IMR-90 (cell line): ENCODE measurements at regions of chr17 and their contacts with region 1.

Region 1: DNA sequence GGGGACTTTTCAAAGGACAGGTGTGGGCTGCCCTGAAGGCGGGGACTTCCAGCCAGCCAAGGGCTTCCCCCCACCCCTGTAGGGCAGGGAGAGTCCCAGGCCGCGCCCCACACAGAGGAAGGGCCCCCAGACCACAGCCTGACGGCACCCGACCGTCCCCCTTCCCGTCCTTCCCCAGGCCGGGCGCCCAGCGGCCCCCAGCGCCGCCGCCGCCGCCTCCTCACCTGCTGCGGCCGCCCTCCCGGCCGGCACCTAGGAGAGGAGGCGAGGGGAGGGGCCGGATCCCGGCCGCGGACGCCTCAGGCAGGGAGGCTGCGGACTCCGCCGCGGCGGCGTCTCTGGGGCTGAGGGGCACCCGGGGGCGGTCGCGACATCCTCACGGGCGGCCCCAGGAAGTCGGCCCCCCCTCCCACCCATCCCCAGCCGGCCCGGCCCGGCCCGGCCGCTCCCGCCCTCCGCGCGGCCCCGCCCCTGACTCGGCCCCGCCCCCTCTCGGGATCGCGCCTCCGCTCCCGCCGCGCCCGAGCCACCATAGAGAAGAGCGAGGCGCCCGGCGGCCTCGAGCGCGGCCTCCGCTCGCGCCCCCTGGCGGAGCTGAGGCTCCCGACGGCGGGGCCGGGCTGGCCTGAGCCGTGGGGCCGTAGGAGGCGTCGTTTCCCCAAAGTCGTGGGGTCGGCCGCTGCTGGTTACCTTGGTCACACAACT is 25.5 kb upstream of the RFFL start:
- DNase-seq: peak; percentile 69
- ATAC-seq: peak; percentile 89
- H3K4me3 ChIP-seq: peak overlapping the region; percentile 87
- H3K27ac ChIP-seq: peak overlapping the region; percentile 73
- H3K4me1 ChIP-seq: peaks cover 11% of the 10 kb centered on the region
- H3K27me3 ChIP-seq: no peaks in the 10 kb centered on the region
- CTCF ChIP-seq: peak; percentile 87
- POLR2A ChIP-seq: no peak; the same call in 1 of the 2 replicates
- RAD21 ChIP-seq: peak; percentile 79

Region 2: DNA sequence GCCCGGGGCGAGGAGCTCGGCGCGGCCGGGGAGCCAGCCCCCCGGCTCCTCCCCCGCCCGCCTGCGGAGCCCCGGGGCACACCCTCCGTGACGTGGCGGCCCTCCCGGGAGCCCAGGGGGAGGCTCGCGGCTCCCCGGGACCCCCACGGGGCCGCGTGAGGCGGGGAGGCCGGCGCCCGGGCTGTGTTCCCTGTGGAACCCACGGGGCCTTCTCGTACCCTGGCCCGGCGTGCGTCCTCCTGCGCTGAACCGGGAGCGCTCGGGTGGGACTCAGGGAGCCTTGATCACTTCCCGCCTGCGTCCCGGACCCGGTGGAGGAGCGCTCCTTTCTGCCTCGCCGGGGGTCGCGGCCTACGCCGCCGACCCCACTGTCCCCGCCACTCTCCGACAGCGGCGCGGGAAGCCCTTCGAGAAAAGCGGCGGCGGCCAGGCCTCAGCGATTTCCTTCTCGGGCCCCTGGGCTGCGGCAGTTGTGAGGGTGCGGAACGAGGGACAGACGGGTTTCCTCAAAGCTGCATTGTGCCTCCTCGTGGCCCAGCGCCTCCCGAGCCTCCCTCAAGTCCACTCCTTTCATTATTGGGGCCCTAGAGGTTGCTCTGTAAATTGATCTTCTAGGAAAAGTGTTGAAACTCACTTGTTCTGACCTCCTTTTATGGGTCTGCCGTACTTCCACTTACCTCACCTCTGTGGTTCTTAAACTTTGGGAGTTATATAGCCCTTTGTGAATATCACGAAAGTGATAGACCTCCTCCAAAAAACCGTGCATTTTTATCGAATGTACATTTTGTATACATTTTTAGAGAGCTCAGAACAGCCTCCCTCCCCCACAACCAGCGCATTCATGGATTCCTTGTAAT is 108.1 kb before region 1 on chr17:
- CTCF ChIA-PET with region 1: no interaction called
- POLR2A ChIA-PET with region 1: no interaction called
- dilution Hi-C with region 1: no loop called
- in situ Hi-C with region 1: no loop called
- intact Hi-C with region 1: loop called (anchors 1 kb)
- DNase-seq: peak; percentile 80
- ATAC-seq: peak; percentile 94
- H3K4me3 ChIP-seq: peak overlapping the region; percentile 91
- H3K27ac ChIP-seq: peak overlapping the region; percentile 96
- H3K4me1 ChIP-seq: peaks cover 7% of the 10 kb centered on the region
- H3K27me3 ChIP-seq: no peaks in the 10 kb centered on the region
- CTCF ChIP-seq: peak; percentile 50
- POLR2A ChIP-seq: peak; percentile 77
- RAD21 ChIP-seq: peak; percentile 36

Region 3: DNA sequence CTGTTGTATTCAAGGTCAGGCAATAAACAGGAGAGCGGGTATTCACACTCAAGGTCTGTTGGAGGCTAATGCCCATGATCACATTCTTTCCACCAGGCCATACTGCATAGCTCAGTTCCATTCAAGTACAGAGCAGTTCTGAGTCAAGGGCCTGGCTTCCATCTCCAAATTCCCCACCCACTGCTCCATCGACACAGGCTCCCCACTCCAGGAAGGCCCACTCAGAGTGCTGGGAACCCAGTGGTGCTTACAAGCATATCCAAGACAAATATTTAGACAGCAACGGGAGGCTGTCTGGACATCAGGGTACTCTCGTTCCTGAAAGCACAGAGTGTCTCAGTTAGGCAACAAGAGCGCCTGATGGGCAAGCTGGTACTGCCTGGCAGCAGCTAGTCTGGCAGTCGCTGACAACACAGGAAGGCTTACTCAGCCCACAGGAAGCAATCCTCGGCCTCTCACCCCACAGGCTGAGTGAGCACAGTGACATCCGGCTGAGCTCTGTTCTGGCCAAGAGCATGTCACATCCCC is 66.4 kb before region 1 on chr17:
- CTCF ChIA-PET with region 1: interaction called, 4 read pairs
- POLR2A ChIA-PET with region 1: interaction called, 3 read pairs
- dilution Hi-C with region 1: no loop called
- in situ Hi-C with region 1: no loop called
- intact Hi-C with region 1: loop called (anchors 1 kb)
- DNase-seq: peak; percentile 87
- ATAC-seq: peak; percentile 97
- H3K4me3 ChIP-seq: no peak overlapping the region
- H3K27ac ChIP-seq: peak overlapping the region; percentile 34
- H3K4me1 ChIP-seq: 0 out of 2 replicates have a peak, but pooled peaks cover 2% of the 10 kb centered on the region
- H3K27me3 ChIP-seq: no peaks in the 10 kb centered on the region
- CTCF ChIP-seq: peak; percentile 50
- POLR2A ChIP-seq: peak; percentile 68; the same call in 1 of the 2 replicates
- RAD21 ChIP-seq: peak; percentile 35

Region 4: DNA sequence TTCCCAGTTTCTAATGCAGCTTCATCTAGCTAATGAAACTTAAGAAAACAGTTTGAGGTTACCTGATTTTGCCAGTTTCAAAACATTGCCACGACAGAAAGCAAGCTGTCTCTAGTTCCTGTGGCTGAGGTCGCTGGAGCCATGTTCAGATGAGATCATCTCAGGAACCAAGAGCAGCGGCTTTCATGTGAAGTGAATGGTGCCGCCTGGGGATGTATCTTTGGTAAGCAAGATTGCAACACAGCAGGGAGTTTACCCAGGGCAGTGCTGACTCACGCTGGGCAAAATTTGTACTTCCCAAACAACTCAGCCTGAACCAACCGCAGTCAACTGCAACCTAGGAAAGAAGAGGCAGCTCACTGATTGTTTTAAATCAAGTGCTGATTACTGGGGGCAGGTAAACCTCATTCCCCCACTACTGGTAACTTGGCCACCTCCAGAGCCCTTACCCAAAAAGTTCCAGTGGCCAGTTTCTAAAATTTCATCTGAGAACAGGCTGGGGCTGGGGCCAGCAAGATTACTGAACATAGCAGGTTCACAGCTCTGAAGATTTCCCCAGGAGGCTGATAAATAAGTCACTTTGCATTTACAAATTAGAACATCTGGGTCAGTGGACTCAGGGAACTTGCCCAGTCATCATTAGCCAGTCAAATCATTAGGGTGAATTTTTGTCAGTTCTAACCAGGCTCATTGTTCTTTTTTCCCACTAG is 25.4 kb before region 1 on chr17 and contains the start of gene RFFL:
- CTCF ChIA-PET with region 1: interaction called, 4 read pairs
- POLR2A ChIA-PET with region 1: no interaction called
- dilution Hi-C with region 1: no loop called
- in situ Hi-C with region 1: no loop called
- intact Hi-C with region 1: loop called (anchors 2 kb)
- DNase-seq: peak; percentile 99
- ATAC-seq: peak; percentile 98
- H3K4me3 ChIP-seq: peak within 1 kb of the TSS; percentile 8; the same call in 1 of the 2 replicates
- H3K27ac ChIP-seq: peak within 1 kb of the TSS; percentile 82
- H3K4me1 ChIP-seq: peaks cover 6% of the 10 kb centered on the region
- H3K27me3 ChIP-seq: no peaks in the 10 kb centered on the region
- CTCF ChIP-seq: peak; percentile 32
- POLR2A ChIP-seq: peak; percentile 73
- RAD21 ChIP-seq: peak; percentile 39
- total RNA-seq, gene RFFL: 19.2 and 20.8 TPM in 2 replicates

Region 5: GRCh38 chr17:35119368-35120165 is 30.5 kb after region 1 on chr17 and contains the start of gene RAD51D:
- CTCF ChIA-PET with region 1: no interaction called
- POLR2A ChIA-PET with region 1: no interaction called
- dilution Hi-C with region 1: no loop called
- in situ Hi-C with region 1: no loop called
- intact Hi-C with region 1: no loop called
- DNase-seq: peak; percentile 56
- ATAC-seq: peak; percentile 94
- H3K4me3 ChIP-seq: peak within 1 kb of the TSS; percentile 61
- H3K27ac ChIP-seq: peak within 1 kb of the TSS; percentile 66
- H3K4me1 ChIP-seq: peaks cover 6% of the 10 kb centered on the region
- H3K27me3 ChIP-seq: no peaks in the 10 kb centered on the region
- CTCF ChIP-seq: peak; percentile 97
- POLR2A ChIP-seq: 0 out of 2 replicates have a peak, but pooled peaks have one; percentile 31
- RAD21 ChIP-seq: peak; percentile 93
- total RNA-seq, gene RAD51D: 9.7 and 12.7 TPM in 2 replicates